Ascending aorta (tissue), 2 donors: ENCODE measurements at regions of chr17 and their contacts with region 1.

Region 1: GRCh38 chr17:42928714-42929496 is 28.3 kb downstream of the G6PC1 start:
- DNase-seq: peak; percentile 15 to 80
- H3K4me3 ChIP-seq: peak overlapping the region in 1 of 2 donors; percentile 11
- H3K27ac ChIP-seq: peak overlapping the region; percentile 47 to 71
- H3K4me1 ChIP-seq: no peaks in the 10 kb centered on the region
- H3K27me3 ChIP-seq: no peaks in the 10 kb centered on the region
- CTCF ChIP-seq: peak; percentile 69 to 79 (median 76)

Region 2: GRCh38 chr17:42843358-42843934 is 85.5 kb before region 1 on chr17:
- intact Hi-C with region 1: loop called (anchors 1 kb)
- DNase-seq: no peak
- H3K4me3 ChIP-seq: no peak overlapping the region
- H3K27ac ChIP-seq: peak overlapping the region in 1 of 2 donors; percentile 17
- H3K4me1 ChIP-seq: no peaks in the 10 kb centered on the region
- H3K27me3 ChIP-seq: no peaks in the 10 kb centered on the region
- CTCF ChIP-seq: peak; percentile 93 to 96 (median 95)

Region 3: DNA sequence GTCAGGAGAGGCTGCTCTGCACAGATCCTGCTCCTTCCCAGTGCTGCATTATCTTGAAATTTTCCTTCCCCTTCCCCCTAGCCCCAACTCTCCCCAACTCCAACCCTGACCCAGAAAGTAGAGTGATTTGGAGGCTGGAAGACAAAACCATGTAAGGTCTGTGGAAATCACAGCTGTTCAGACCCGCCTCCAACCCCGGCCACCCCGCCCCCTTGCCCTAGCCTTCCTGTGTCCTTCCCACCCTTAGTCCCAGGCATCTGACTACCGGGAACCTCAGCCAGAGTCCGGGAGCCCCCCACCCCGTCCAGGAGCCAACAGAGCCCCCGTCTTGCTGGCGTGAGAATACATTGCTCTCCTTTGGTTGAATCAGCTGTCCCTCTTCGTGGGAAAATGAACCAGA is 78.0 kb before region 1 on chr17 and contains the start of gene AOC3:
- intact Hi-C with region 1: loop called (anchors 1 kb)
- DNase-seq: peak in 1 of 2 donors; percentile 80
- H3K4me3 ChIP-seq: peak within 1 kb of the TSS; percentile 51 to 62
- H3K27ac ChIP-seq: peak within 1 kb of the TSS; percentile 83 to 84
- H3K4me1 ChIP-seq: peaks cover 0 to 23% of the 10 kb centered on the region in 2 donors
- H3K27me3 ChIP-seq: no peaks in the 10 kb centered on the region
- CTCF ChIP-seq: no peak
- total RNA-seq, gene AOC3: 128 TPM

Region 4: GRCh38 chr17:42895185-42895555 is 33.7 kb before region 1 on chr17:
- intact Hi-C with region 1: loop called (anchors 5 kb)
- DNase-seq: peak; percentile 46 to 92
- H3K4me3 ChIP-seq: no peak overlapping the region
- H3K27ac ChIP-seq: peak overlapping the region; percentile 47 to 88
- H3K4me1 ChIP-seq: peaks cover 28 to 40% of the 10 kb centered on the region in 2 donors
- H3K27me3 ChIP-seq: no peaks in the 10 kb centered on the region
- CTCF ChIP-seq: no peak

Region 5: DNA sequence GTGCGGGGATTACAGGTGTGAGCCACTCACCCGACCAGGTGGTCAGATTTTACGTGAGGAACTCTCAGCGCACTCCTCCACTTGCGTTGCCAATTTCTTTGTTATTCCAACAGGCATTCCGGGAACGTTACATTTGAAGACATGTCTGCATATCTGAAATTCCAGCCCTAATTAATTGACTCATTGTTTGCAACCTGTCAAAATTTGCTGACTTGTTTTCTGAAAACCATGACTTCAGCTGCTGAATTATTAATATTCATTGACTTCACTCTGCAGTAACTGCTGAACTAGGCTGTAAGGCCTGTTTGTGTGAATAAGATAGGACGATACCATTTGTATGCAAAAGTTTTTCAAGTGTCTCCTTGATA is 11.7 kb before region 1 on chr17:
- intact Hi-C with region 1: no loop called
- DNase-seq: no peak
- H3K4me3 ChIP-seq: no peak overlapping the region
- H3K27ac ChIP-seq: no peak overlapping the region
- H3K4me1 ChIP-seq: no peaks in the 10 kb centered on the region
- H3K27me3 ChIP-seq: no peaks in the 10 kb centered on the region
- CTCF ChIP-seq: no peak